Head of caudate nucleus (tissue), 42 donors: ENCODE measurements at regions of chr7 and their contacts with region 1.

Region 1: GRCh38 chr7:101217388-101218235 is at the starts of genes PLOD3 and ZNHIT1:
- DNase-seq: peak; percentile 88 to 99 (median 95)

Region 2: GRCh38 chr7:101134399-101135030 is 83.1 kb before region 1 on chr7:
- intact Hi-C with region 1: no loop called
- DNase-seq: peak in 17 of 42 donors; percentile 26 to 72 (median 49)

Region 3: DNA sequence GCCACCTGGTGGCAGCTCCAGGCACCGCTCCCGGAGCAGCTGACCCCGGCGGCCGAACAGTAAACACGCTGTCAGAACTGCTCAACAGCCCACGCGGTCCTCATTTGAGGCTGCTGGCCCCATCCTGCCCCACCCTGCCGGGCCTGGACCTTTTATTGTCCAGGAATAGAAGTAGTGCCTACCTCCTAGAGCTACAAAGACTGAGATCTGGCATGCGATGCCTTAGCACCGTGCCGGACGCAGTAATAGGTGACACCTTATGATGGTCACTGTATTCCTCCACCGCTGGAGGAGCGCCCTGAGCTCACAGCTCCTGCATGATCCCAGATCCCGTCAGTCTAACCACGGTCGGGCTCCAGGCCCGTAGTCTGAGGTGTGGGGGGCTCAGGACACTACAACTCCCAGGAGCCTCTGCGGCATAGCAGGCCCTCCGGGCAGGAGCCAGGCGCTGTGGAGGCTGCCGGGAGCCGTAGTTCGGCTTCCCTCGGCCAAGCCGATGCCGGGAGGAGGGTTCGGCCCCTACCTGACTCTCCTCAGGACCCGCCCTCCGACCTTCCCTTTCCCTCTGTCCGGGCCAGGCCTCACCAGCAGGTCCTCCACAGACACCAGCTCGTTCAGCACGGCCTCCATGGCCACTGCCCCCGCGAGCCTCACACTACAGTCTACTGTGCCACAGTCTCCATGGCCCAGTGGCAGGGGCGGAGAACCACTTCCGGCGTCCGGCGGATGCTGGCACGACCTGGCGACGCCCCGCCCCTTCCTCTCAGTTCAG is 26.9 kb after region 1 on chr7 and contains the start of gene FIS1:
- intact Hi-C with region 1: loop called (anchors 2 kb)
- DNase-seq: peak; percentile 86 to 98 (median 95)

Region 4: GRCh38 chr7:101287032-101287431 is 69.4 kb after region 1 on chr7:
- intact Hi-C with region 1: loop called (anchors 10 kb)
- DNase-seq: no peak